ENCODE measurements at regions of chr5 and their contacts with region 1.

Region 1: GRCh38 chr5:76715736-76716455 is at the start of gene F2R:
- DNase-seq: peak; percentile 90
- H3K4me3 ChIP-seq: peak within 1 kb of the TSS; percentile 70
- H3K27ac ChIP-seq: peak within 1 kb of the TSS; percentile 90
- H3K4me1 ChIP-seq: peaks cover 33% of the 10 kb centered on the region
- H3K27me3 ChIP-seq: no peaks in the 10 kb centered on the region
- CTCF ChIP-seq: peak; percentile 57
- total RNA-seq, gene F2R: 83.3 and 92.1 TPM in 2 replicates

Region 2: GRCh38 chr5:76601470-76601869 is 114.4 kb before region 1 on chr5:
- CTCF ChIA-PET with region 1: interaction called, 3 read pairs
- POLR2A ChIA-PET with region 1: no interaction called
- intact Hi-C with region 1: loop called (anchors 2 kb)
- DNase-seq: peak; percentile 85
- H3K4me3 ChIP-seq: no peak overlapping the region
- H3K27ac ChIP-seq: no peak overlapping the region
- H3K4me1 ChIP-seq: peaks cover 38% of the 10 kb centered on the region
- H3K27me3 ChIP-seq: no peaks in the 10 kb centered on the region
- CTCF ChIP-seq: peak; percentile 84

Region 3: GRCh38 chr5:76641514-76642120 is 74.3 kb before region 1 on chr5:
- CTCF ChIA-PET with region 1: no interaction called
- POLR2A ChIA-PET with region 1: no interaction called
- intact Hi-C with region 1: loop called (anchors 10 kb)
- DNase-seq: peak; percentile 88
- H3K4me3 ChIP-seq: no peak overlapping the region
- H3K27ac ChIP-seq: no peak overlapping the region
- H3K4me1 ChIP-seq: peaks cover 6% of the 10 kb centered on the region
- H3K27me3 ChIP-seq: no peaks in the 10 kb centered on the region
- CTCF ChIP-seq: peak; percentile 94

Region 4: GRCh38 chr5:76689321-76690036 is 26.4 kb before region 1 on chr5:
- CTCF ChIA-PET with region 1: no interaction called
- POLR2A ChIA-PET with region 1: interaction called, 3 read pairs
- intact Hi-C with region 1: loop called (anchors 2 kb)
- DNase-seq: peak; percentile 88
- H3K4me3 ChIP-seq: no peak overlapping the region
- H3K27ac ChIP-seq: peak overlapping the region; percentile 60
- H3K4me1 ChIP-seq: peaks cover 71% of the 10 kb centered on the region
- H3K27me3 ChIP-seq: no peaks in the 10 kb centered on the region
- CTCF ChIP-seq: no peak

Measured in A673 (cell line).